ENCODE measurements at regions of chr4 and their contacts with region 1.

Region 1: GRCh38 chr4:73446336-73446938 is 10.4 kb downstream of the AFP start:
- DNase-seq: no peak
- ATAC-seq: peak; percentile 97
- H3K4me3 ChIP-seq: no peak overlapping the region
- H3K27ac ChIP-seq: no peak overlapping the region
- H3K4me1 ChIP-seq: no peaks in the 10 kb centered on the region
- H3K27me3 ChIP-seq: no peaks in the 10 kb centered on the region; a peak in 1 of 4 replicates
- CTCF ChIP-seq: peak; percentile 74 to 86 (median 85)
- EP300 ChIP-seq: no peak
- POLR2A ChIP-seq: no peak
- RAD21 ChIP-seq: peak; percentile 70

Region 2: DNA sequence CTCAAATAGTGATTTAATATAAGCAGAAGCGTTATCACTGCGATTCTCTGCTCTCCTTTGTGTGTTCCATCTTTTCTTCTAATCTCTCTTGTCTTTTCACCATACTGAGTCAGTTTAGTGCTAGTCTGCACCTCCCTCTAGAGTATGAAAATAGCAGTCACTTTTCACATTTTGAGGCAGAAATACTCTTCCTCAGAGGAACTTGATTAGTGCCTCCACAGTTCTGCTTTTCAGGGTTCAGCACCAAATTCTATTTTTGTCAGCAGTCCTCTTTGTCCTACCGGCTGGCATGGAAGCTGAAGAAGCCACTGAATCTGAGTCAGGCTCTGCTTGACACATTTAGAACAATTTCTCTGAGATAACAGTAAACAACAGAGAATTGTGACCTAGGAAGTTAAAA is 138.2 kb before region 1 on chr4:
- CTCF ChIA-PET with region 1: interaction called, 5 read pairs
- POLR2A ChIA-PET with region 1: no interaction called
- RAD21 ChIA-PET with region 1: interaction called, 4 read pairs
- SMC1A ChIA-PET with region 1: interaction called, 4 read pairs
- in situ Hi-C with region 1: no loop called
- intact Hi-C with region 1: loop called (anchors 2 kb)
- DNase-seq: no peak
- ATAC-seq: peak; percentile 57
- H3K4me3 ChIP-seq: no peak overlapping the region
- H3K27ac ChIP-seq: no peak overlapping the region
- H3K4me1 ChIP-seq: no peaks in the 10 kb centered on the region
- H3K27me3 ChIP-seq: no peaks in the 10 kb centered on the region
- CTCF ChIP-seq: peak; percentile 29 to 54 (median 32); a peak in 4 of 6 replicates
- EP300 ChIP-seq: no peak
- POLR2A ChIP-seq: no peak
- RAD21 ChIP-seq: peak; percentile 78

Region 3: DNA sequence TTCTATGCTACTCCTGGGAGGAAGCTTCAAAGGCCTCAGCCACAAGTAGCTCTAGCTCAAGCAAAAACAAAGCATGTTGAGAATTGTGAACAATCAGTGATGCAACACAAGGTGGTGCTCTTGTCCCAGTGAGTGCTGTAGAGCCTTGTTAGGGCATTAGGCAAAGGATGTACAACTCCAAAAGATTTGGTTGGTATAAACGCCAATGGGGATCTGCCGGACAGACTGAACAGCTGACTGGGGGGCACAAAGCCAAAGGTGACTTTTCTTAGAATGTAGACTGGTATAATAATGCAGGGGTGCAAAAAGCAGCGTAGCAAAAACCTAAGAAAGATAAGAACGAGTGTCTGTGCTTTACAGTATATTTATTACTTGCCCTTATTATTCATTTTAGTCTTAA is 105.0 kb before region 1 on chr4:
- CTCF ChIA-PET with region 1: interaction called, 53 read pairs
- POLR2A ChIA-PET with region 1: no interaction called
- RAD21 ChIA-PET with region 1: interaction called, 16 read pairs
- SMC1A ChIA-PET with region 1: interaction called, 28 read pairs
- in situ Hi-C with region 1: no loop called
- intact Hi-C with region 1: loop called (anchors 1 kb)
- DNase-seq: peak; percentile 16
- ATAC-seq: peak; percentile 90
- H3K4me3 ChIP-seq: no peak overlapping the region
- H3K27ac ChIP-seq: no peak overlapping the region
- H3K4me1 ChIP-seq: no peaks in the 10 kb centered on the region
- H3K27me3 ChIP-seq: no peaks in the 10 kb centered on the region
- CTCF ChIP-seq: peak; percentile 44 to 71 (median 57); a peak in 4 of 6 replicates
- EP300 ChIP-seq: no peak
- POLR2A ChIP-seq: no peak
- RAD21 ChIP-seq: peak; percentile 82

Region 4: DNA sequence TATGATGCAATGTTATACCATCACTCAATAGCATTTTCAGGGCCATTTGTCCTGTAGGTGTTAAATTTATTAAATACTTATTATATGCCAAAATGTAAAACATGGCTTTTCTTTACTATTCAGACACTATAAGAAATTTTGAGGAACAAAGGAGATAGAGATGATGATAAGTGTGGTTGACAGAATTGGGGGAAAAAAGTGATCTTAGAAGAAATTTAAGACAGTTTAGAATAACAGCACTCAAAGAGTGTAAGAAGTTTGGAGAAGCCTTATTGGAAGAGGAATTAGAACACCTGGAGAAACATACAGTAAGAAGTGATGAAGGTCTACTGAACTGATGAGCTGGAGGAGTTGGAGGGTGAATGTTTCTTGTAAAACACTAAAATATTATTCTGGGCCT is 23.3 kb before region 1 on chr4:
- CTCF ChIA-PET with region 1: interaction called, 11 read pairs
- POLR2A ChIA-PET with region 1: no interaction called
- RAD21 ChIA-PET with region 1: no interaction called
- SMC1A ChIA-PET with region 1: interaction called, 3 read pairs
- in situ Hi-C with region 1: no loop called
- intact Hi-C with region 1: no loop called
- DNase-seq: no peak
- ATAC-seq: no peak
- H3K4me3 ChIP-seq: no peak overlapping the region
- H3K27ac ChIP-seq: no peak overlapping the region
- H3K4me1 ChIP-seq: no peaks in the 10 kb centered on the region
- H3K27me3 ChIP-seq: no peaks in the 10 kb centered on the region
- CTCF ChIP-seq: no peak
- EP300 ChIP-seq: no peak
- POLR2A ChIP-seq: no peak
- RAD21 ChIP-seq: no peak

Region 5: DNA sequence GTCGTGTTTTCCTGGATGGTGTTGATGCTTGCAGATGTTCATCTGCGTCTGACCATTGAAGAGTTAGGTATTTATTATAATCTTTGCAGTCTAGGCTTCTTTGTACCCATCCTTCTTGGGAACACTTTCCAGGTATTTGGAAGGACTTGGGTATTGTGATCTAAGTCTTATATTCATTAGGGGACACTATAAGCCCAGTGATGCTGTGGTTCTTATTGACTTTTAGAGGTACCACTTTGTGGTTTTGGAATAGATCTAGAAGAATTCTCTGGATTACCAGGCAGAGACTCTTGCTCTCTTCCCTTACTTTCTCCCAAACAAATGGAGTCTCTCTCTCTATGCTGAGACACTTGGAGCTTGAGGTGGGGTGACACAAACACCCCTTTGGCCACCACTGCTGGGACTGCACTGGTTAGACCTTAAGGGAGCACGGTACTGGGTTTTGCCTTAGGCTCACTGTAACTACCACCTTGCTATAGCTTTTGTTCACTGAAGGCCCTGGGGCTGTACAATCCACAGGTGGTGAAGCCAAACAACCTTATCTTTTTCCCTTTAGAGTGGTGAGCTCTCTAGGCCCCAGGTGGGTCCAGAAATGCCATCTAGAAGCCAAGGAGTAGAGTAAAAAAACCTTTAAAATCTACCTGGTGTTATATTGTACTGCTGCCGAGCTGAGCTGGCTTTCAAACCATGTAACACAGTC is 76.8 kb after region 1 on chr4:
- CTCF ChIA-PET with region 1: no interaction called
- POLR2A ChIA-PET with region 1: no interaction called
- RAD21 ChIA-PET with region 1: no interaction called
- SMC1A ChIA-PET with region 1: no interaction called
- in situ Hi-C with region 1: loop called (anchors 10 kb)
- intact Hi-C with region 1: no loop called
- DNase-seq: no peak
- ATAC-seq: no peak
- H3K4me3 ChIP-seq: no peak overlapping the region
- H3K27ac ChIP-seq: no peak overlapping the region
- H3K4me1 ChIP-seq: no peaks in the 10 kb centered on the region; the same call in 1 of the 2 replicates
- H3K27me3 ChIP-seq: no peaks in the 10 kb centered on the region
- CTCF ChIP-seq: no peak
- EP300 ChIP-seq: no peak
- POLR2A ChIP-seq: no peak
- RAD21 ChIP-seq: no peak; the same call in 1 of the 2 replicates

Region 6: DNA sequence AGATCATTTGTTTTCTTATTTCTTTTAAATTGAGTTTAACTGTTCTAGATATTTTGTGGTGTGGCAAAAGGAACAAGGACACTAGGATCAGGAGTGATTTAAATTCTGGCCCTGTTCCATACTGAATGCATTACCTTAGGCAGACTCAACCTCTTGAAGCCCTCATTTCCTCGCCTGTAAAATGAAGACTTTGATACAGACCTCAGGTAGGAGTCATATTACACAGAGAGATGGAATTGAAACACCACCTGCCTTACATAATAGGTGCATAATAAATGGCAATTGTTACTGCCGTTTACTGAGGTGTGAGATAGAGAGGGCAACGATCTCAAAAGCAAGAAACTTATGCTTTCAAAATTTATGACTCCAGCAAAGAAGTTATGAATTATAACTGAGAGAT is 202.0 kb after region 1 on chr4:
- CTCF ChIA-PET with region 1: interaction called, 23 read pairs
- POLR2A ChIA-PET with region 1: no interaction called
- RAD21 ChIA-PET with region 1: no interaction called
- SMC1A ChIA-PET with region 1: interaction called, 8 read pairs
- in situ Hi-C with region 1: loop called (anchors 10 kb)
- intact Hi-C with region 1: loop called (anchors 5 kb)
- DNase-seq: no peak
- ATAC-seq: no peak
- H3K4me3 ChIP-seq: no peak overlapping the region
- H3K27ac ChIP-seq: no peak overlapping the region
- H3K4me1 ChIP-seq: no peaks in the 10 kb centered on the region
- H3K27me3 ChIP-seq: no peaks in the 10 kb centered on the region
- CTCF ChIP-seq: no peak
- EP300 ChIP-seq: no peak
- POLR2A ChIP-seq: no peak
- RAD21 ChIP-seq: no peak

Region 7: DNA sequence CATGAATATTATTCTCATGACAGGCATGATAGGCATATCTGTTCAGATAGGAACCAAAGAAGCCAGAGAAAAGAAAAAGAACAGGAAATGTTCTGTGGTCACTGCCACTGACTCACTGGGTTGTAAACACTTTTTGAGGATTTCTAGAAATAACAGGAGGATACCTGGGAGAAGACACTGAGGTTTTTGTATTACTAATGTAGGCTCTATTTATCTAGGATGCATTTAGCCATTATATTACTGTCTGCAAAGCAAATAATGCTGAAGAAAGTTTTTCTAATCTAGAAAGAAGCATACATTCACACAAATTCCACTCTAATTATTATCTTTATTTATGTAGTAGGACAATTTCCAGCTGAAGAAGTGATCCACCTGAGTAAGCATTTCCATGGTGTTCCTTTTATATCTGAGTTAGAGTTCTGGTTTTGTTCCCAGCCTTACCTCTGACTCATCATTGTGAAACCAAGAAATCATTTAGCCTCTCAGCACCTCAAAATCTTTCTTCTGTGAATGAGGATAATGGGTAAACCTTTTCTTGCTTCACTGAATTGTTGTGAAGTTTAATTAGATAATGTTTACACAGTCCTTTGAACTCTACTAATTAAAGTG is 821.7 kb after region 1 on chr4:
- CTCF ChIA-PET with region 1: no interaction called
- POLR2A ChIA-PET with region 1: no interaction called
- RAD21 ChIA-PET with region 1: no interaction called
- SMC1A ChIA-PET with region 1: no interaction called
- in situ Hi-C with region 1: no loop called
- intact Hi-C with region 1: no loop called
- DNase-seq: no peak
- ATAC-seq: no peak
- H3K4me3 ChIP-seq: no peak overlapping the region
- H3K27ac ChIP-seq: no peak overlapping the region
- H3K4me1 ChIP-seq: no peaks in the 10 kb centered on the region
- H3K27me3 ChIP-seq: no peaks in the 10 kb centered on the region
- CTCF ChIP-seq: no peak
- EP300 ChIP-seq: no peak
- POLR2A ChIP-seq: no peak
- RAD21 ChIP-seq: no peak